Activated T-helper 2 cell treated with anti-CD3 and anti-CD28 coated beads, Interferon-gamma antibody, Interleukin-2, Interleukin-4, amounts not matched to agents 10 μg/mL and 5 μg/mL and 100 μg/mL, durations not matched to agents 14 hours and 24 hours and 36 hours (primary cell): ENCODE measurements at regions of chr1 and their contacts with region 1.

Region 1: DNA sequence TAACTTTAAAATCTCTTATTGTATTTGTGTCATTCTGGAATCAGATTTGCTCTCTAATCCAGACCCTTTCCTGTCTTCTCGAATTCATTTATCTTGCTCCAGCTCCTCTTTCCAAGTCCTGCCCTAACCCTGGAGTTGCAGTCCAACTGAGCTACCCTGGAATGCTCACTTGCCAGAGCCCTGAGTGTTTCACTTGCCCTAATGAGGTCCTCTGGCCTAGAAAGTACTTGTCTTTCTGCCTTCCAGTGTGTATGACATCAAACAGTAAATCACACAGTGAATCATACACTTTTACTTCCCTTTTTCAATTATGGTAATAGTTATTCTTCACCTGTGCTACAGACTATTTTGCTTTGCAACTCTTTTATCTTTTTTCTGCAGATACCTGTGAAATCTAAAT is 96.9 kb downstream of the NEK7 start:
- DNase-seq: no peak
- H3K4me3 Mint-ChIP-seq: peak overlapping the region; percentile 55
- H3K27ac Mint-ChIP-seq: peak overlapping the region; percentile 90
- H3K4me1 Mint-ChIP-seq: peaks cover 41% of the 10 kb centered on the region
- H3K27me3 Mint-ChIP-seq: no peaks in the 10 kb centered on the region

Region 2: DNA sequence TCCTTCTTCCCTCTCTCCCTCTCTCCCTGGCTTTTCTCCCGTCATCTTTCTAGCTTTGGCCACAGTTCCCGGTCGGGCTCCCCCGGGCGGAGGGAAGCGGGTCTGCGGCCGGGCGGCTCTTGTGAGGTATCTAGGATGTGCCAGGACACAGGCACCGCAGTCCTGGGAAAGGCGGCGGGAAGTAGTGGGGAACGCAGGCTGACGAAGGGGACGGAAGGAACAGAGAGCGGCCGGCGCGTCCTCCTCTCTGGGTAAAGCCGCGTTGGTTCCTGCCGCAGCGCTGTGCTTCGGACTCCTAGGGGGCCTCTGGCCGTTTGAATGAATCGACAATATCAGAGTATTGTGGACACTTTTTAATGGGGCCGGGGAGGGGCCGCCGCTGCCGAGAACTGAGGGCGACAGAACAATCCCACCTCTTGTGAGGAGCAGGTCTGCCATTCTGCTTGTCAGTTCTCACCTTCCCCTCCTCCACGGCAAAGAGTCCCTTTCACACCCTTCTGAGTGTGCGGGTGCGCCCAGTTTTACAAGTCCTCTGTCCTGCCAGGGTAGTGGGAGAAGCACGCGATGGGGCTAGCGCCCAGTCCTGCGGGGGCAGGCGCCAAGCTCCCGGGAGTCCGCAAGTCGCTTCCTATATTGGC is 337.7 kb before region 1 on chr1:
- intact Hi-C with region 1: loop called (anchors 10 kb)
- DNase-seq: no peak
- H3K4me3 Mint-ChIP-seq: peak overlapping the region; percentile 79
- H3K27ac Mint-ChIP-seq: no peak overlapping the region
- H3K4me1 Mint-ChIP-seq: peaks cover 74% of the 10 kb centered on the region
- H3K27me3 Mint-ChIP-seq: peaks cover 98% of the 10 kb centered on the region

Region 3: GRCh38 chr1:198088360-198089071 is 165.2 kb before region 1 on chr1:
- intact Hi-C with region 1: loop called (anchors 5 kb)
- DNase-seq: no peak
- H3K4me3 Mint-ChIP-seq: no peak overlapping the region
- H3K27ac Mint-ChIP-seq: no peak overlapping the region
- H3K4me1 Mint-ChIP-seq: peaks cover 8% of the 10 kb centered on the region
- H3K27me3 Mint-ChIP-seq: no peaks in the 10 kb centered on the region

Region 4: GRCh38 chr1:198187973-198188588 is 65.6 kb before region 1 on chr1:
- intact Hi-C with region 1: loop called (anchors 1 kb)
- DNase-seq: no peak
- H3K4me3 Mint-ChIP-seq: peak overlapping the region; percentile 5
- H3K27ac Mint-ChIP-seq: peak overlapping the region; percentile 4
- H3K4me1 Mint-ChIP-seq: peaks cover 66% of the 10 kb centered on the region
- H3K27me3 Mint-ChIP-seq: no peaks in the 10 kb centered on the region

Region 5: DNA sequence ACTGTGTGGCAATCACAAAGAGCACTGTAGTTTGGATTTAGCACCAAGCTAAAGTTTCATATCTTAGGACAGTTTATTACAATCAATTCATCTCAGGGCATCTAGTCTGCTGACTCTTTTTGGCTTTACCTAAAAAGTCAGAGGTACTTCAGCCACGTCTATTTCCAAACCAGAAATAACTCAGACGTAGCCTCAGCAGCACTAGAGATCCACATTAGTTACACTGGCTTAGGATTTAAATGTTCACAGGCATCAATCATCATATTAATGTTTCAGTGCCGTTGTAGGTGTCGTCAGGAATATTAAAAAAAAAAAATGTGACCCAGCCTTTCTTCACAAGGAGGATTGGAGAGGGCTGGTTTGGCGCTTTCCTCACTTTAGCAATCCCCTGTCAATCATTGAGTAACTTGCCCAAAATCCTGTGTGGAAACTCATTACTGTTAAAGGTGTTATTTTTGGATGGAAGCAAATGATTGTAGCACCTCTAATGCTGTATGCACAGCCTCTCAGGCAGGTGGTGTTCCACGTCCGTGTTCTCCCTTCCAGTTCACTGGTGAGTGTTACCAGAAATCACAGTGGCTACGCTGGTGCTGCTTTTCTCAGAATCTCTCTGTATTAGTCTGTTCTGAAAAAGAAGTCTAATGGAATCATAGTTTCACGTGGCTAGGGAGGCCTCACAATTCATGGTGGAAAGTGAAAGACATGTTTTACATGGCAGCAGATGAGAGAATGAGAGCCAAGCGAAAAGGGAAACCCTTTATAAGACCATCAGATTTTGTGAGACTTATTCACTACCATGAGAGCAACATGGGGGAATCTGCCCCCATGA is 51.5 kb before region 1 on chr1:
- intact Hi-C with region 1: loop called (anchors 1 kb)
- DNase-seq: no peak
- H3K4me3 Mint-ChIP-seq: peak overlapping the region; percentile 61
- H3K27ac Mint-ChIP-seq: peak overlapping the region; percentile 82
- H3K4me1 Mint-ChIP-seq: peaks cover 71% of the 10 kb centered on the region
- H3K27me3 Mint-ChIP-seq: no peaks in the 10 kb centered on the region

Region 6: DNA sequence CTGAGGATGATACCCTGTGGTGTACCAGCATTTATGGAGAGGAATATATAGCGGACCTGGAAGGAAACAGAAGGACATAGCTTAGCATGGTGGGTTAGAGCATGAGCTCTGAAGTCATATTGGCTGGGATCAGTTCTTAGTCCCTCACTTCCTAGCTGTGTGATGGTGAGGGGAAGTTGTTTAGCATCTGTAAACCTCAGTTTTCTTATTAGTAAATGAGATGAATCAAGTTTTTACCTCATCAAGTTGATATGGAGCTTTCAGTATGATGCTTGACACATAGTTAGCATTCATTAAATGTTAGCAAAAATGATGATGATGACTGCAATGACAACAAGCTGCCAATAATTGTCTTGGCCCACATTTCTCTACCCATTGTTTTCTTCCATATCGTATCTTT is 12.1 kb before region 1 on chr1:
- intact Hi-C with region 1: loop called (anchors 2 kb)
- DNase-seq: no peak
- H3K4me3 Mint-ChIP-seq: no peak overlapping the region
- H3K27ac Mint-ChIP-seq: peak overlapping the region; percentile 51
- H3K4me1 Mint-ChIP-seq: peaks cover 19% of the 10 kb centered on the region
- H3K27me3 Mint-ChIP-seq: no peaks in the 10 kb centered on the region

Region 7: GRCh38 chr1:198465201-198466144 is 211.8 kb after region 1 on chr1:
- intact Hi-C with region 1: loop called (anchors 5 kb)
- DNase-seq: no peak
- H3K4me3 Mint-ChIP-seq: no peak overlapping the region
- H3K27ac Mint-ChIP-seq: peak overlapping the region; percentile 12
- H3K4me1 Mint-ChIP-seq: peaks cover 17% of the 10 kb centered on the region
- H3K27me3 Mint-ChIP-seq: no peaks in the 10 kb centered on the region

Region 8: DNA sequence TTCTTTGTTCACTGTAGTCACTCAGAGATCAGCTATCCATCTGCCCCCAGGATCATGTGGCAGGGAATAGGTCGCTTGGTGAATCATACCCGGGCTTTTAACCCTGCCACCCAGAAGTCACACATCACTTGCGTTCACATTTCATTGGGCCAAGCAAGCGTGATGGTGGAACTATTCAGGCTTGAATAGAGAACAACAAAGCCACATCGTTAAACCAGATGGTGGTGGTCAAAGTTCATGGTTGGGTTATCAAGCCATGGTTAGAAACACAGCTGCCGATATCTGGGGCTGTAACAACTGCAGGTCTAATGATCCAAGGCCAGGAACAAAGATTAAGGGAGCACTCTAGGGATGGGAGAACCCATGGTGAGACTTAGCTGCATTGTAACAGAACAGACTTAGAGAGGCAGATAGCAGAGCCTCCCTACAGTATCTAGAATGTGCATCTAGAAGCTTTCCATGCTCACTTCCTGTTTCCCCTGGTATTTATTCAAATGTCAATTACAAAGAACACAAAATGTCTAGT is 345.2 kb after region 1 on chr1:
- intact Hi-C with region 1: no loop called
- DNase-seq: no peak
- H3K4me3 Mint-ChIP-seq: no peak overlapping the region
- H3K27ac Mint-ChIP-seq: peak overlapping the region; percentile 77
- H3K4me1 Mint-ChIP-seq: peaks cover 62% of the 10 kb centered on the region
- H3K27me3 Mint-ChIP-seq: no peaks in the 10 kb centered on the region